AG04450 (cell line): ENCODE measurements at regions of chr18 and their contacts with region 1.

Region 1: DNA sequence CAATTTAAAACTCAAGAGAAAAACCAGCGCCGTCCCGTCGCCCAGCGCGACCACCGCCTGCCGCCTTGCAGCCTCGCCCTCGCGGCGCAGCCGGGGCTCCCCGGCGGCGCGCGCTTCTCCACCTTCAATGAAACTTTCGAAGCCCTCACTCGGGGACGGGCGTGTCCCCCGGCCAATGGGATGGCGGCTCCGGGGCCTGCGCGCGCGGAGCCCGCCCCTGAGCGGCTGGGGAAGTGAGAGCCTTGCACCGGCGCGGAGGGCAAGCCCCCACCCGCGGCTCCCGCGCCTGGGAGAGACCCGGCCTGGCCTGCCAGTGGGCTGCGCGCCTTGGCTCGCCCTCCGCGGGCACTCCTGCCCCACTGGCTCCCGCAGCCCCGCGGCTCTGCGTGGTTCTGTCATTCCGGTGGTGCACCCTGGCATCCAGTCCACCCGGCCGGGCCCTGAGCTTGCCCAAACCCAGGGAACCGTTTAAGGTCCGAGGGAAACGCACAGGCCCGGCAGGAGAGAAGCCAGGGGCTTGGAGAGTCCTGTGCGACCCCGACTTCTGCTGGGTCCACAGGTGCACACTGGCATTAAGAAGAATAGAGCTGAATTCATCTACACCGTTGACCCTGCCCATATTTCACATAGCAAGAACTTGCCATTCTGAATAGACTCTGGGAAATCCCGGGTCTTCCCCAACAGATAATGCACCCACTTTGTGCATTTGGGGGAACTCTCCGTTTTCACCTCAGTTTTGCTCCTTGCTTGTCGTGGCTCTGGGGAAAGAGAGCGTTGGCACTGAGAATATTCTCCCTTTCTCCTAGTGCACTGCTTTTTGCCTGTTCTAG is at the start of gene PIEZO2:
- DNase-seq: no peak
- H3K4me3 ChIP-seq: peak within 1 kb of the TSS; percentile 46
- H3K27ac ChIP-seq: no peak within 1 kb of the TSS
- H3K27me3 ChIP-seq: peaks cover 57% of the 10 kb centered on the region
- CTCF ChIP-seq: no peak
- polyA plus RNA-seq, gene PIEZO2: 2.7 and 2.8 TPM in 2 replicates

Region 2: GRCh38 chr18:10560450-10561045 is 589.1 kb before region 1 on chr18:
- CTCF ChIA-PET with region 1: interaction called, 78 read pairs
- POLR2A ChIA-PET with region 1: no interaction called
- DNase-seq: peak; percentile 53
- H3K4me3 ChIP-seq: peak overlapping the region; percentile 31; the same call in 1 of the 2 replicates
- H3K27ac ChIP-seq: no peak overlapping the region
- H3K27me3 ChIP-seq: no peaks in the 10 kb centered on the region
- CTCF ChIP-seq: peak; percentile 82

Region 3: DNA sequence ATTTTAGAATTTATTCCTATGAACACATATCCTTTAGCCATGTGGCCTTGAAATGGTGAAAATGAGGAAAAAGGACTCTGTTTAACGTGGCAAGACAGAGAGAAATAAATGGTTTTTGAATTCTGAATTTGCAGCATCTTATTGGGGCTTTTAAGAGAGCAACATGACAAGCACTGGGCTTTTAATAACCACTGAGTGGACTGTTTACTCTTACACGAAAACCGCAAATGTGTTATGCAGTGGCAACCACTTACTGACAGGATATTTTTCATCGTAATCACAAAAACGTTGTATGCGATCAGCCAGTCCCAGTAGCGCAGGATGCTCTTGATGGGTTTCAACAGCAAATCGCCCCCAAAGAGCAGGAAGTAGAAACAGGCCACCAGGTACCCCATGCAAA is 397.3 kb before region 1 on chr18:
- CTCF ChIA-PET with region 1: no interaction called
- POLR2A ChIA-PET with region 1: no interaction called
- DNase-seq: no peak
- H3K4me3 ChIP-seq: no peak overlapping the region
- H3K27ac ChIP-seq: no peak overlapping the region
- H3K27me3 ChIP-seq: no peaks in the 10 kb centered on the region
- CTCF ChIP-seq: no peak

Region 4: DNA sequence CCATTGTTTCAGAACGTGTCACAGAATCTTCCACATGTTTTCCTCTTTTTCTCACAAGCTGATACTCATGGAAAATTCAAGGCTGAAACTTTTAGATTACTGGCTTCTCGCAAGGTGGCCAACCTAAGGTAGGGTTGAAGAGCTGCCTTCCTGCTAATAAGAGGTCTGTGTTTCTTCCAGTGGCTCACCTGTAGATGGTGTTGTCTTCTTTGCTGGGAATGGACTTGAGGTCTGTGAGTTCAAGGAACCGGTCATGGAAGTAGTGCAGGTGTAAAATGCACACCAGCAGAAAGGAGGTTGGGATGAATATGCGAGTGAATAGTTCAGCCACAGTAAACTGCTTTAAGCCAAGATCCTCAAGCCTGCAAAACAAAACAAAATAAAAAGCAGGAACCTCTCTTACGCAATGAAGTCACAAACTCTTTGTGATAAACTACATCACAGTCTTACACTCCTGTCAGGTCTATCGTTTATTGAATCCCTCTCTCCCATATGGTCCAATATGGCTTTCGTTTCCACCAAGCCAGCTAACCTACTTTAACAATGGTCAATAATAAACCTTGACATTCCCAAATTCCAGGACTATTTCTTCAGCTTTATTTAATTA is 365.0 kb before region 1 on chr18:
- CTCF ChIA-PET with region 1: interaction called, 13 read pairs
- POLR2A ChIA-PET with region 1: no interaction called
- DNase-seq: no peak
- H3K4me3 ChIP-seq: no peak overlapping the region
- H3K27ac ChIP-seq: no peak overlapping the region
- H3K27me3 ChIP-seq: no peaks in the 10 kb centered on the region
- CTCF ChIP-seq: no peak

Region 5: DNA sequence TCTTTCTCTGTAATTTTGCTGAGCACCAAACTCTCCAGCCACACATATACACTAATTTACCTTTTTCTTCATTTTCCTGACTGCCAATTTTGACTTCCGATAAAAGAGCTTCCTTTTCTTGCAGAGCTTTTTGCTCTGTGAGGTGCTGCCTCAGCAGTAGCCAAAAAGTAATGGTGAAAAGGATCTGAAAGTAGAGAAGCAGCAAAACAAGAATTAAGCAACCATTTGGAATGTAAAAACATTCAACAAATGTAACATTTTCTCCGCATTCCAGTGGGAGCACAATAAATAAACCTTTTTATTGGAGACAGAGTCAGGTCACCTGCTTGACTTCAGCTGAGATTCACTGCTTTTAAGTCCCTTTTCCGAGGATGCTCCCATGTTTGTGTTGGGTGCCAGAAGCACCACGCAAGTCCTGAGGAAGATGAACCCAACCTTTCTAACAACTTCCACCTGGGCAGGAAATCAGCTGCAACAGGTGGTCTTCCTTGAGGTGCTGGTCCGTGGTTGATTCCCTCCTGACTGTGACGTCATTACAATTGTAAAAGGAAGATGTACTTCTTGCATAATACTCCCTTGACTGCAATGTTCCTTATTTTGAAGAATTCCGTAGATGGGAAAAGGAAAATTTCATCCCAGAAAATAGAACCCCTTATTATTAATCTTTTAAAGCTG is 358.4 kb before region 1 on chr18:
- CTCF ChIA-PET with region 1: interaction called, 13 read pairs
- POLR2A ChIA-PET with region 1: no interaction called
- DNase-seq: no peak
- H3K4me3 ChIP-seq: no peak overlapping the region
- H3K27ac ChIP-seq: no peak overlapping the region
- H3K27me3 ChIP-seq: no peaks in the 10 kb centered on the region
- CTCF ChIP-seq: no peak

Region 6: GRCh38 chr18:10851824-10852319 is 297.8 kb before region 1 on chr18:
- CTCF ChIA-PET with region 1: interaction called, 185 read pairs
- POLR2A ChIA-PET with region 1: no interaction called
- DNase-seq: peak; percentile 33
- H3K4me3 ChIP-seq: no peak overlapping the region
- H3K27ac ChIP-seq: no peak overlapping the region
- H3K27me3 ChIP-seq: peaks cover 24% of the 10 kb centered on the region
- CTCF ChIP-seq: peak; percentile 82

Region 7: DNA sequence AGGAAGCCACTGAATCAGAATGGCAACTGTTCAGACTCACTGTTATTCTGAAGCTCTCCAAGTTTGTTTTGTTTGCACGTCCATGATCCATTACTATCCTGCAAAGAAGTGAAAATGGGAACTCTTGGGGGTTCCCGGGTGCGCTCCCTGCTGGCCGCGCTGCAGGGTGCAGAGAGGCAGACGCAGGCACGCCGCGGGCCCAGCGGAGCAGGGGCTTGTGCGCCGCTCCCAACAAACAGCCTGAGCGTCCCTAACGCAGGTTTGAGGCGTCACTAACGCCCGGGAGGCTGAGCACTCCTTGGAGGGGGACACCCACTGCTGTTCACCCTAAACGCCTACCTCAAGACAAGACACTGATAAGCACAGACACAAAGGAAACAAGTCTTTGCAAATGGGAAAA is 14.0 kb after region 1 on chr18:
- CTCF ChIA-PET with region 1: interaction called, 15 read pairs
- POLR2A ChIA-PET with region 1: no interaction called
- DNase-seq: no peak
- H3K4me3 ChIP-seq: no peak overlapping the region
- H3K27ac ChIP-seq: no peak overlapping the region
- H3K27me3 ChIP-seq: no peaks in the 10 kb centered on the region
- CTCF ChIP-seq: peak; percentile 67

Region 8: GRCh38 chr18:11199477-11199876 is 49.8 kb after region 1 on chr18:
- CTCF ChIA-PET with region 1: no interaction called
- POLR2A ChIA-PET with region 1: no interaction called
- DNase-seq: no peak
- H3K4me3 ChIP-seq: no peak overlapping the region
- H3K27ac ChIP-seq: no peak overlapping the region
- H3K27me3 ChIP-seq: peaks cover 7% of the 10 kb centered on the region
- CTCF ChIP-seq: no peak

Region 9: GRCh38 chr18:11369556-11369955 is 219.9 kb after region 1 on chr18:
- CTCF ChIA-PET with region 1: no interaction called
- POLR2A ChIA-PET with region 1: no interaction called
- DNase-seq: no peak
- H3K4me3 ChIP-seq: no peak overlapping the region
- H3K27ac ChIP-seq: no peak overlapping the region
- H3K27me3 ChIP-seq: no peaks in the 10 kb centered on the region
- CTCF ChIP-seq: no peak

Region 10: DNA sequence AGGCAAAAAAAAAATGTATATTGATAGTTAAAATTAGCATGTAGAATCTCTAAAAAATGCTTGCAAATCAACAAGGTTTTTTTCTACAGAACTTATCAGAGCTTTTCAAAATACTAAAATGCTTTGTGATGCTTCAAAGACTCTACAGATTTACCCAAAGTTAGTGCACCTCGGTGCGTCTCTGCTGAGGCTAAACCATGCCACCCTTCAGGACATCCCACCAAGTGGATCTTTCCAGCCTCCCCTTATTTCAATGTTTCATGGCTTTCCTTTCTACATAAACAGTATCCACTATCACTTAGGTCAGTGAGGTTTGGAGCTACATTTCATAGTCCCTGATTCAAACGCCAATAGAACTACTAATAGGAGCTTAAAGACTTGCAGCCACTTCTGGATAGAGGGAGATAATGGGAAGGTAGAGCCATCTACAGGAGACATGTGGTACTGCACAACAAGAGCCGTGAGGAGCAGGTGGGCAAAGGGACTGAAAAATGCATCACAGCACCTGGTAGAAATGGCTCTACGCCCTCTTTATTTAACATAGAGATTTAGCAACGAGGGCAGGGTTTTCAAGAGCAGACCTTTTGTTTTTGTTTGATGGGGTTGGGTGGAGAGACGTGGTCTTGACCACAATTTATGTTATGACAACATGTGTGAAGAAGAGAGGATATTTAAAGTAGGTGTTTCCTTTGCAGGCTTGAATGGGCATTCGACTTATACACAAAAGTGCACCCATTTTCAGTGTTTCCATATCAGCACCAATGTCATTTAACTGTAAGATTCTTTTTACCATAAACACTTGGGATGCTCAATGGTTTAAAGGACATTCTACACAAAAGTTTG is 403.7 kb after region 1 on chr18:
- CTCF ChIA-PET with region 1: interaction called, 24 read pairs
- POLR2A ChIA-PET with region 1: no interaction called
- DNase-seq: peak; percentile 23
- H3K4me3 ChIP-seq: no peak overlapping the region
- H3K27ac ChIP-seq: no peak overlapping the region
- H3K27me3 ChIP-seq: peaks cover 8% of the 10 kb centered on the region
- CTCF ChIP-seq: peak; percentile 97